ENCODE measurements at regions of chr3 and their contacts with region 1.

Region 1: DNA sequence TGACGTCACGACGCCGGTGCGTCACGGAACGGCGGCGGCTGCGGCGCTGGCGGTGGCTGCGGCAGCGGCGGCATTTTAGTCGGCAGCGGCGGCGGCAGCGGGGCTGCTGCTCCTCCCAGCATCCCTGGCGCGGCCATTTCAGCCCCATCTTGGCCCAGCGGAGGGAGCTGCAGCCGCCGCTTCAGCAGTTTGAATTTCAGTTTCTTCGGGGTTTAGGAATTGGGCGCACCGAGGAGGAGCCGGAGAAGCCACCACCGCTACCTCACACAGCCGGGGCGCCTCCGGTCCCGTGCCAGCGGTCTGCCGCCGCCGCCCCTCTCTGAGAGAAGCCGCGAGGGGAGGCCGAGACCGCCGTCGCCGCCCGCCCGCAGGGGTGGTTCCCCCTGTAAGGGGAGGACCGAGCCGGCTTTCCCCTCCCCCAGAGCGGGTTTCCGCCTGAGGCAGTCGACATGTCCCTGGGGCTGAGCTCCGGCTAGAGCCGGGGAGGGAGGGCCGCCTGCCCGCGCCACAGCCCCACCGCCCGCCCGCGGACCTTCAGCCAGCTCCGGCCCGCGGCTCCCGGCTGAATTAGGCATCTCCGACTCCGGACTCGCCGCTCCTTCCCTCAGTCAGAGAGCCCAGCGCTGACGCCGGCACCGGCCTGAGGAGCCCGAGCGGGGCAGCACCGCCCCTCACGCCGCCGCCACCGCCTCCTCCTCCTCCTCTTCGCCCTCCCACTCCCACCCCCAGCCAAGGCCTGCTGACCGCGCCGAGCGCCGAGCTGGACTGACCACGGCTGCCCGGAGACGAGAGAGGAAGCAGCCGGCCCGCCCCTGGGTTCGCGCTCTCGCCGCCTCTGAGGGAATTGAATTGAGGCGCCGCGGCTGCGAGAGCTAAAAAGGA is at the start of gene TSC22D2:
- DNase-seq: peak; percentile 98
- ATAC-seq: peak; percentile 73
- H3K4me3 ChIP-seq: peak within 1 kb of the TSS; percentile 66 to 88 (median 77)
- H3K4me3 Mint-ChIP-seq: peak within 1 kb of the TSS; percentile 87
- H3K27ac ChIP-seq: peak within 1 kb of the TSS; percentile 91 to 99
- H3K27ac Mint-ChIP-seq: peak within 1 kb of the TSS; percentile 94
- H3K4me1 ChIP-seq: peaks cover 21 to 25% of the 10 kb centered on the region in 2 donors
- H3K4me1 Mint-ChIP-seq: peaks cover 33% of the 10 kb centered on the region
- H3K27me3 ChIP-seq: no peaks in the 10 kb centered on the region
- H3K27me3 Mint-ChIP-seq: no peaks in the 10 kb centered on the region
- CTCF ChIP-seq: no peak
- total RNA-seq, gene TSC22D2: 45.9 and 48.5 TPM in 2 replicates

Region 2: GRCh38 chr3:149969940-149970715 is 438.3 kb before region 1 on chr3:
- CTCF ChIA-PET with region 1: no interaction called
- POLR2A ChIA-PET with region 1: no interaction called
- intact Hi-C with region 1: loop called (anchors 2 kb)
- DNase-seq: peak; percentile 87
- ATAC-seq: peak; percentile 71
- H3K4me3 ChIP-seq: peak overlapping the region; percentile 35 to 78 (median 67)
- H3K4me3 Mint-ChIP-seq: peak overlapping the region; percentile 96
- H3K27ac ChIP-seq: no peak overlapping the region
- H3K27ac Mint-ChIP-seq: peak overlapping the region; percentile 83
- H3K4me1 ChIP-seq: peaks cover 14% of the 10 kb centered on the region in 2 donors
- H3K4me1 Mint-ChIP-seq: peaks cover 22% of the 10 kb centered on the region
- H3K27me3 ChIP-seq: peaks cover 0 to 15% (median 14%) of the 10 kb centered on the region in 4 experiments
- H3K27me3 Mint-ChIP-seq: peaks cover 27% of the 10 kb centered on the region
- CTCF ChIP-seq: no peak

Region 3: GRCh38 chr3:150309557-150309956 is 98.9 kb before region 1 on chr3:
- CTCF ChIA-PET with region 1: no interaction called
- POLR2A ChIA-PET with region 1: no interaction called
- intact Hi-C with region 1: no loop called
- DNase-seq: no peak
- ATAC-seq: no peak
- H3K4me3 ChIP-seq: no peak overlapping the region
- H3K4me3 Mint-ChIP-seq: no peak overlapping the region
- H3K27ac ChIP-seq: no peak overlapping the region
- H3K27ac Mint-ChIP-seq: no peak overlapping the region
- H3K4me1 ChIP-seq: no peaks in the 10 kb centered on the region
- H3K4me1 Mint-ChIP-seq: no peaks in the 10 kb centered on the region
- H3K27me3 ChIP-seq: peaks cover 0 to 10% (median 0%) of the 10 kb centered on the region in 4 experiments
- H3K27me3 Mint-ChIP-seq: peaks cover 45% of the 10 kb centered on the region
- CTCF ChIP-seq: no peak

Region 4: DNA sequence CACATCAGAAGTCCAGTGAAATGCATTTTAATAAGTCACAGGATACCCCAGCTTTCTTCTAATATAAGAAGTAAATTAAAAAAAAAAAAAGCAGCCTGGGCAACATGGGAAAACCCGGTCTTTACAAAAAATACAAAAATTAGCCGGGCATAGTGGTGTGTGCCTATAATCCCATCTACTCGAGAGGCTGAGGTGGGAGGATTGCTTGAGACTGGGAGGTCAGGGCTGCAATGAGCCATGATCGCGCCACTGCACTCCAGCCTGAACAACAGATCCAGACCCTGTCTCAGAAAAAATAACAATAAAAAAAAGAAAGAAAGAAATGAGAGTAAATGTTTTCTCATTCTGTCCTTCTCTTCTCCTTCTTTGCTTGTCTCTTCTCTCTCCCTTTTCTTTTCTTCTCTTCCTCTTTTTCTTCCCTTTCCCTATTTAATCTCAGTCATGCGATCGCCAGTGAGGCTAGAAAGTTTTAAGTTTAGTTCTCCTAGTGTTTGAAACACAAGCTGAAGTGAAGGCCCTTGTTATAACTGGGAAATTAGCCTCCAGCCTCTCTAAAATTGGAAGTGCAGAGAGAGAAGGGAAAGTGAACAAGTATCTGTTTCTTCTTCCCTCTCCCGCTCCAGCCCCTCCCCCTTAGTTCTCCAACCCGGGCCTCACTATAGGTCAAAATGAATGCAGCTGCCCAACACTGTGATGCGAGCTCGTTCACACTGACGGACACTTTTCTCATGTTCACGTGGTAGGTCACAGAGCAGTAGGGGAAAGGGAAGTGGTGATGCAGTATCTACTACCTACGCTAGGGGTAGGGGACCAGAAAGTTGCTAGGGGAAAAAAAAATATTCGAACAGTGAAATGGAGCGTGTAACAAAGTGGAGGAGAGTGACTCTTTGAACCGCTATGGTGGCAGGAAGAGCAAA is 23.9 kb before region 1 on chr3:
- CTCF ChIA-PET with region 1: interaction called, 11 read pairs
- POLR2A ChIA-PET with region 1: interaction called, 26 read pairs
- intact Hi-C with region 1: loop called (anchors 1 kb)
- DNase-seq: peak; percentile 89
- ATAC-seq: peak; percentile 94
- H3K4me3 ChIP-seq: peak overlapping the region; percentile 31 to 58 (median 44)
- H3K4me3 Mint-ChIP-seq: peak overlapping the region; percentile 78
- H3K27ac ChIP-seq: peak overlapping the region; percentile 85 to 89
- H3K27ac Mint-ChIP-seq: peak overlapping the region; percentile 86
- H3K4me1 ChIP-seq: peaks cover 20 to 26% of the 10 kb centered on the region in 2 donors
- H3K4me1 Mint-ChIP-seq: peaks cover 38% of the 10 kb centered on the region
- H3K27me3 ChIP-seq: no peaks in the 10 kb centered on the region
- H3K27me3 Mint-ChIP-seq: no peaks in the 10 kb centered on the region
- CTCF ChIP-seq: peak; percentile 60

Region 5: GRCh38 chr3:150495563-150496168 is 87.2 kb after region 1 on chr3:
- CTCF ChIA-PET with region 1: interaction called, 72 read pairs
- POLR2A ChIA-PET with region 1: no interaction called
- intact Hi-C with region 1: loop called (anchors 1 kb)
- DNase-seq: peak; percentile 68
- ATAC-seq: peak; percentile 45
- H3K4me3 ChIP-seq: no peak overlapping the region
- H3K4me3 Mint-ChIP-seq: no peak overlapping the region
- H3K27ac ChIP-seq: no peak overlapping the region
- H3K27ac Mint-ChIP-seq: no peak overlapping the region
- H3K4me1 ChIP-seq: no peaks in the 10 kb centered on the region
- H3K4me1 Mint-ChIP-seq: no peaks in the 10 kb centered on the region
- H3K27me3 ChIP-seq: no peaks in the 10 kb centered on the region
- H3K27me3 Mint-ChIP-seq: no peaks in the 10 kb centered on the region
- CTCF ChIP-seq: peak; percentile 91

Region 6: DNA sequence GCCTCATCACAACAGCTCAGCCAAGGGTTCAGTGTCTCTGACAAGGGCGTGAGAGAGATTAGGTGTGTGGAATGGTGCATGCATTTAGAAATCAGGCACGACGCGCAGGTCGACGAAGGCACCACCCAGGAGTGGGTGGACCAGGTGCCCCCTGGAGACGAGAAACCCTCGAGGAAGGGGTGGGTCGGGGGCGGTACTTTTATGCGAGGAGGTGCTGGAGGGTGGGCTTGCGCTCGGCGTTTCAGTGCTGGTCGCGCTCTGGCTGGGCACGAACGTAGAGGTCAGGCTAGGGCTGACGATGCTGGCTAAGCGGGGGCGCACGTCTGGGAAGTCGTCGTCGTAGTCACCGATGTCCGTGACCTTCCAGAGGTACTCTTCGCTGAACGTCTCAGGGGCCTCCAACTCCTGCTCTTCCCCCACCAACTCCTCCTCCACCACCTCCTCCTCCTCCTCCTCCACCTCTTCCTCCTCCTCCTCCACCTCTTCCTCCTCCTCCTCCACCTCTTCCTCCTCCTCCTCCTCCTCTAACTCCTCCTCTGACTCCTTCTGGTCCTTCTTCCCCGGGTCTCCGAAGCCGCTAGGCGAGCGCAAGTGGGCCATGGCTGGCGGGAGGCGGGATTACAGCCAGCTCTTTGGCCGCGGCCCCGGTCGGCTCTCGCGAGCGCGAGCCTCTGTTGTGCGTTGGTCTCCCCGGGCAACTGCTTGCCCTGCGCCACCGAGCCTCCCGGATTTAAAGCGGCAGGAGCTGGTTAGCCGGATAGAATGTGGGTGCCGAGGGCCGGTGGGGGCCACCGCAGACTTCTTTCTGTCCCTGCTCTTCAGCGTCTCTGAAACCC is 295.1 kb after region 1 on chr3 and contains the start of gene ERICH6:
- CTCF ChIA-PET with region 1: no interaction called
- POLR2A ChIA-PET with region 1: no interaction called
- intact Hi-C with region 1: loop called (anchors 1 kb)
- DNase-seq: peak; percentile 93
- ATAC-seq: peak; percentile 92
- H3K4me3 ChIP-seq: peak within 1 kb of the TSS; percentile 68 to 88 (median 76)
- H3K4me3 Mint-ChIP-seq: peak within 1 kb of the TSS; percentile 98
- H3K27ac ChIP-seq: peak within 1 kb of the TSS; percentile 84 to 97
- H3K27ac Mint-ChIP-seq: peak within 1 kb of the TSS; percentile 97
- H3K4me1 ChIP-seq: peaks cover 0 to 13% of the 10 kb centered on the region in 2 donors
- H3K4me1 Mint-ChIP-seq: peaks cover 16% of the 10 kb centered on the region
- H3K27me3 ChIP-seq: no peaks in the 10 kb centered on the region
- H3K27me3 Mint-ChIP-seq: no peaks in the 10 kb centered on the region
- CTCF ChIP-seq: no peak
- total RNA-seq, gene ERICH6: 0.44 TPM in 1 of 2 replicates, not detected in the other